AG04449 (cell line): ENCODE measurements at regions of chr1 and their contacts with region 1.

Region 1: GRCh38 chr1:53739109-53739681 is at the start of gene GLIS1:
- DNase-seq: no peak
- H3K4me3 ChIP-seq: peak within 1 kb of the TSS; percentile 82
- CTCF ChIP-seq: no peak

Region 2: DNA sequence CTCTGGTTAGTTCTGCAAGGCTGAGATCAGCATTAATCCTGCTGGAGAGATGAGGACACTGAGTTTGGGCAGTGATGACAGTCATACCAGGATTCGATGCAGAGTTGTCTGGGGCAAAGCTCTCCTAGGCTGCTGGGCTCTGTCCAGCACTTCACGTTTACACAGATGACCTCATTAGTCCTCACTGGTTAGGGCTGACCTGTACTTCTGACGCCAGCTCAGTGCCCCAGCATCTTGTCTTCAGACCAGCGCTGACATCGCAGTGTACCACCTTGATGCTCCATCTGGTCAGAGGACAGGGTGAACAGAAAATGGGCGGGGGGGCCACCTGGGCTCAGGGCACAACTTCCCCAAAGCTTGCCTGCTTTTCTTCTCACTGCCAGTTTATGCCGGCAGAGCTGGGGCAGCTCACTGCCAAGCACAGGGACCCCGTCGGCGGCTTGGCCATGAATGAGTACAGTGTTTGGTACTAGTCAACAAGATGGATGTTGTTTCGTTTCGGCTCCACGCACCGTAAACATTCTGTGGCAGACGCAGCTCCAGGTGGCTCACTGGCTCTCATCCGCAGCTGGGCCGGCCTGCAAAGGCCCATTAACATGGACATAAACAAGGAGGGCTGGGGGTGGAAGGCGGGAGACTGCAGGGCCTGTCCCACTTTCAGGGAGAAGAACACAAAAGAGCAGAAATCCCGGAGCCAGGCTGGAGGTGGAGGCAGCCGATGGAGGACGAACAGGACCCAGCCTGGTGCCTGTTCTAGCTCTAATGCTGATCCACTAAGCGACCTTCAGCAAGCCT is 118.9 kb before region 1 on chr1:
- CTCF ChIA-PET with region 1: no interaction called
- POLR2A ChIA-PET with region 1: no interaction called
- DNase-seq: no peak
- H3K4me3 ChIP-seq: no peak overlapping the region
- CTCF ChIP-seq: no peak

Region 3: GRCh38 chr1:53754484-53755312 is 15.5 kb after region 1 on chr1:
- CTCF ChIA-PET with region 1: interaction called, 21 read pairs
- POLR2A ChIA-PET with region 1: no interaction called
- DNase-seq: no peak
- H3K4me3 ChIP-seq: no peak overlapping the region
- CTCF ChIP-seq: peak; percentile 72